Activated B cell treated with CpG ODN at 0.5 μM for 24 hours (primary cell): ENCODE measurements at regions of chr19 and their contacts with region 1.

Region 1: GRCh38 chr19:11125994-11126685 is 29.4 kb downstream of the SPC24 start:
- DNase-seq: peak; percentile 54
- ATAC-seq: peak; percentile 63
- H3K4me3 Mint-ChIP-seq: no peak overlapping the region
- H3K27ac Mint-ChIP-seq: no peak overlapping the region
- H3K4me1 Mint-ChIP-seq: peaks cover 7% of the 10 kb centered on the region
- H3K27me3 Mint-ChIP-seq: no peaks in the 10 kb centered on the region
- CTCF ChIP-seq: peak; percentile 56

Region 2: DNA sequence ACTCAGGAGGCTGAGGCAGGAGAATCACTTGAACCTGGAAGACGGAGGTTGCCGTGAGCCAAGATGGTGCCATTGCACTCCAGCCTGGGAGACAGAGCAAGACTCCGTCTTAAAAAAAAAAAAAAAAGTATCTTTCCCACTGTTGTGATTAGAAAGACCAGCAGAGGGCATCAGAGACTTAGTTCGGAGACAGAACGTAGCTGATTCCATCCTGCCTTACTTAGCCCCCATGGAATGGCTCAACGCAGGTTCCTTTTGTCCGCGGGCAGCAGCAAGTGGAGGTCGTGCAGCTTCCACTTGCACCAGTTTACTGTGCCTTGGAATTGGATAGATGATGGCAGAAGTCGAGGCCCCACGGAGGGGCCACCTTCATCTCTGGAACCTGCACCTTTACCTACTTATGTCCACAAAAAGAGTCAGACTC is 189.5 kb before region 1 on chr19:
- CTCF ChIA-PET with region 1: interaction called, 5 read pairs
- POLR2A ChIA-PET with region 1: no interaction called
- intact Hi-C with region 1: loop called (anchors 1 kb)
- DNase-seq: no peak
- ATAC-seq: peak; percentile 80
- H3K4me3 Mint-ChIP-seq: no peak overlapping the region
- H3K27ac Mint-ChIP-seq: no peak overlapping the region
- H3K4me1 Mint-ChIP-seq: peaks cover 3% of the 10 kb centered on the region
- H3K27me3 Mint-ChIP-seq: no peaks in the 10 kb centered on the region
- CTCF ChIP-seq: no peak

Region 3: GRCh38 chr19:11090054-11090900 is 35.9 kb before region 1 on chr19:
- CTCF ChIA-PET with region 1: interaction called, 4 read pairs
- POLR2A ChIA-PET with region 1: interaction called, 8 read pairs
- intact Hi-C with region 1: loop called (anchors 2 kb)
- DNase-seq: peak; percentile 71
- ATAC-seq: peak; percentile 87
- H3K4me3 Mint-ChIP-seq: peak overlapping the region; percentile 78
- H3K27ac Mint-ChIP-seq: peak overlapping the region; percentile 30
- H3K4me1 Mint-ChIP-seq: peaks cover 41% of the 10 kb centered on the region
- H3K27me3 Mint-ChIP-seq: peaks cover 15% of the 10 kb centered on the region
- CTCF ChIP-seq: no peak